Naive thymus-derived CD4-positive, alpha-beta T cell (primary cell): ENCODE measurements at regions of chr9 and their contacts with region 1.

Region 1: DNA sequence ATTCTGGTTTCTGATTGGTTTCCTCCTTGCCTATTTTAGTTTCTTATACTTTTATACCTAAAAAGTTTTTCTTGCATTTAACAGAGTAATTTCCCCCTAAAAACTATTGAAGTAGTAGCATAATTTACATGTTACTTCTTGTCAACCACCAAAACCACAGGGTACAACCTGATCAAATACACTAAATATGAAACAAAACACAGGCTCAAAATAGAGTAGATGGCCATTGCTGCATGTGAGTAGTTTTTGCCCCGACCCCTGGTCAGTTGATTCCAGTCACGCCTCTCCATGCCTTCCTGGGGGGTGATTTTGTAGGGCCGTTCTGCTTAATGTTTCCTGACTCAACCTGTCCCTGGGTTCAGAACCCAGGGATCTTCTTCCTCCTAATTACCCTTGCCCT is 101.8 kb downstream of the TLE4 start:
- DNase-seq: no peak
- ATAC-seq: no peak
- H3K4me3 ChIP-seq: no peak overlapping the region
- H3K4me3 Mint-ChIP-seq: peak overlapping the region in 1 of 10 donors; percentile 44
- H3K27ac ChIP-seq: no peak overlapping the region
- H3K27ac Mint-ChIP-seq: no peak overlapping the region
- H3K4me1 ChIP-seq: no peaks in the 10 kb centered on the region
- H3K4me1 Mint-ChIP-seq: peaks cover 7 to 71% (median 44%) of the 10 kb centered on the region in 7 donors
- H3K27me3 ChIP-seq: no peaks in the 10 kb centered on the region
- H3K27me3 Mint-ChIP-seq: no peaks in the 10 kb centered on the region

Region 2: DNA sequence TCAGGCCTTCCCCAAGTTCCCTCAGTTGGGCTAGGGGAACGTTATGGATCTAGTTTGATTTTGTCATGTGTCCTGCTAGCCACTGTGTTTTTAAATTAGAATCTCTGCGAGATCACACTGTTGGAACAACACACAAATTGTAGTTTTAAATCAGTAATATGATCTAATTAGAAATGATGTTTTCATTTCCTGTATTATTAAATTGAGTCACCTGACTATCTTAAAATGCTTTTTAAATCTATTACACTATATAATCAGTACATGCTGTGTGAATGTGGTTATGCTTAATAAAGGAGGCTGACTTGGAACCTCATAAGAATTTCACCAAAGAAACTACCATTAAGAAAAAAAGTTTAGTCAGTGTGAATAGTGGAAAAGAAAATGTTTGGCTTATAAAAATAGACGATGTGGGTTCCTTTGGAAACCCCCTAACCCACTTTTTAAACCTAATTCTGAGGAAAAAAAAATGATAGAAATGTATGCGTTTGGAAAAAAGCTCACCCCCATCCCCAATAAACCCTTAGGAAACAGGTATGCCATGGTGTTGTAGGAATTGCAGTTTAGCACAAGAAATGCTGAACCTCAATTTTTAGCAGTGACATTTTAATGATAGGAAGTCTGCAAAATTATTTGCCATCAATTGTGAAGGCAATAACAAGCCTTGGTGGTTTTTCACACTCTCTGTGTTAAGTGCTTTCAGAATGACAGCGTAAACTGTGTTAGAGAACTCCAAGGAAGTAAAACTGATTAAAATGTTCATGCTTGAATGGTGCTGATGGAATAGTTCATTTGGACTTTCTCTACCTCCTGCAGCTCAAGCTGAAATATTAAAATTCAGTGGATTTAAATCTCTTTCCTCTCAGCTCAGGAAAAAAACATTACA is 42.9 kb before region 1 on chr9:
- CTCF ChIA-PET with region 1: no interaction called
- POLR2A ChIA-PET with region 1: no interaction called
- intact Hi-C with region 1: loop called in 1 of 2 experiments (anchors 5 kb)
- DNase-seq: no peak
- ATAC-seq: peak; percentile 41
- H3K4me3 ChIP-seq: peak overlapping the region; percentile 3
- H3K4me3 Mint-ChIP-seq: no peak overlapping the region
- H3K27ac ChIP-seq: no peak overlapping the region
- H3K27ac Mint-ChIP-seq: no peak overlapping the region
- H3K4me1 ChIP-seq: peaks cover 0 to 39% of the 10 kb centered on the region in 2 donors
- H3K4me1 Mint-ChIP-seq: peaks cover 26 to 77% (median 61%) of the 10 kb centered on the region in 7 donors
- H3K27me3 ChIP-seq: no peaks in the 10 kb centered on the region
- H3K27me3 Mint-ChIP-seq: no peaks in the 10 kb centered on the region

Region 3: GRCh38 chr9:79817438-79818004 is 143.9 kb after region 1 on chr9:
- CTCF ChIA-PET with region 1: no interaction called
- POLR2A ChIA-PET with region 1: no interaction called
- intact Hi-C with region 1: no loop called
- DNase-seq: peak in 1 of 9 donors; percentile 22
- ATAC-seq: no peak
- H3K4me3 ChIP-seq: no peak overlapping the region
- H3K4me3 Mint-ChIP-seq: no peak overlapping the region
- H3K27ac ChIP-seq: no peak overlapping the region
- H3K27ac Mint-ChIP-seq: no peak overlapping the region
- H3K4me1 ChIP-seq: peaks cover 0 to 6% of the 10 kb centered on the region in 2 donors
- H3K4me1 Mint-ChIP-seq: peaks cover 8 to 32% (median 14%) of the 10 kb centered on the region in 7 donors
- H3K27me3 ChIP-seq: no peaks in the 10 kb centered on the region
- H3K27me3 Mint-ChIP-seq: peaks cover 2 to 14% (median 6%) of the 10 kb centered on the region in 5 donors